ENCODE measurements at regions of chr14 and their contacts with region 1.

Region 1: GRCh38 chr14:63388763-63389431 is 70.2 kb upstream of the GPHB5 start:
- DNase-seq: peak; percentile 78
- ATAC-seq: peak; percentile 80
- H3K4me3 Mint-ChIP-seq: no peak overlapping the region
- H3K27ac Mint-ChIP-seq: peak overlapping the region; percentile 59
- H3K4me1 Mint-ChIP-seq: peaks cover 10% of the 10 kb centered on the region
- H3K27me3 Mint-ChIP-seq: no peaks in the 10 kb centered on the region

Region 2: DNA sequence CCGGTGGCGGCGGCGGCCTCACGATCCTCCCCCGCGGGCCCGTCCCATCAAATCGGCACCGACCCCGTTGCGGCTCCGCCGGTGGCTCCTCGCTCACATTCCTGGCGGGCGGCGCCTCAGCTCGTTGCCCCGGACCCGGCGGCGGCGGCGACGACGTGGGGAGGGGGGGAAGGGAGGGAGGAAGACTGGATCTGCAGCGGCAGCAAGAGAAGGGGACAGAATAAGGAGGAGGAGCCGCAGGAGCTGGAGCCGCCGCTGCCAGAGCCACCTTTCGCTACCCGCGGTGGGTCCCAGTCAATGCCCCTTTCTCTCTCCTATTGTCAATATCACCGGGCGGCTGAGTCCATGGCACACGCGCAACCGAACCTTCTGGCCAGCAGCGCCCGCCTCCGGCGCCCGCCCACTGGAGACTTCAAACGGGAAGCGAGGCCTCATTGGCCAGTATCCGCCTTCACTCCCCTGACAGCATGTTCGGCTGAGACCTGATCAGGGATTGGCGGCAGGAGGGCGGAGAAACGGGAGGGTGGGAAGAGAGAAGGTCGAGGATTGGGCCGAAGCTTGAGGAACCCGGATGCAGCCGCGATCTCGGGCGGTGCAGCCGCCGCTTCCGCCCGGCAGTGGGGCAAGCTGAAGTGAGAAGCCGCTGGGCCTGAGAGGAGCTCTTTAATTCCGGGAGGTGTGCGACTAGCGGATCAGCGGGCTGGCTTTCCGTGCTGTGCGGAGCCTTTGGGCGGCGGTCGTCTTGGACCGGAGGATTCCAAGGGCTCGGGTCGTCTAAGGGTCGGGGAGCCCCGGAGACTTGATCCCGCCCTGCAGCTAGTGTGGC is 154.3 kb after region 1 on chr14 and contains the start of gene PPP2R5E:
- CTCF ChIA-PET with region 1: interaction called, 15 read pairs
- DNase-seq: peak; percentile 99
- ATAC-seq: peak; percentile 95
- H3K4me3 Mint-ChIP-seq: peak within 1 kb of the TSS; percentile 82
- H3K27ac Mint-ChIP-seq: peak within 1 kb of the TSS; percentile 88
- H3K4me1 Mint-ChIP-seq: peaks cover 24% of the 10 kb centered on the region
- H3K27me3 Mint-ChIP-seq: no peaks in the 10 kb centered on the region
- total RNA-seq, gene PPP2R5E: 45.4 to 48.1 TPM